ENCODE measurements at regions of chr16 and their contacts with region 1.

Region 1: DNA sequence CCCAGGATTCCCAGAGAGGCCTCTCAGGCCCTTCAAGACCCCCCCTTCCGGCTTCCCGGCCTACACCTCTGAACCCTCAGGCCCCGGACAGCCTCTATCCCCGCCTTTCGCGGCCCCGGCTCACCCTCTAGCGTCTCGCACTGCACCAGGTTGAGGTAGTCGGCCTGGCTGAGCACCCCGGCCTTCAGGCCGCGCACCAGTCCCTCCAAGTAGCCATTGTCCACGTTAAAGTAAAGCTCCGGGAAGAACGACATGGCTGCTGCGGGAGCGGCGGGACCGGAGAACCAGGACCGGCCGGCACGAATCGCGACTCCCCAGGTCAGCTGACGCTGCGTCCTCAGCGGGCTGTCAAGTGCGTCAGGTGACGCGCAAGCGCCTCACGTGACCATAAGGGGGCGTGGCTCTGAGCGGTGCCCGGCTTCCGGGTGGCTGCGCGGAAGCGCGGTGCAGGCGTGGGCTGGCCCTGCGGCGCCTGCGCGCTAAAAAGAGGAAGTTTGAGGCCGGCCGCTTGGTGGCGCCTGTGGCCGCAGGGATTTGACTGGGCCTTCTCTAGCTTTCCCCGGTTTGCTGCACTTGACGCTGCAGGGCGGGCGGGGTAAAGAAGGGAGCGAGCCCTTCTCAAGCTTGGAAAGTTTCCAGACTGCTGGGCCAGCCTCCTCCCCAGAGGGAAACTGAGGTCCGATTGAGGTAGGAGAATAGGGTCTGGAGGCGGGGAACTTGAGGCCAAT is at the start of gene ATP6V0D1:
- DNase-seq: peak; percentile 97 to 99 (median 98)
- H3K4me3 ChIP-seq: peak within 1 kb of the TSS; percentile 97 to 99
- H3K4me3 Mint-ChIP-seq: peak within 1 kb of the TSS; percentile 94 to 100 (median 99)
- H3K27ac ChIP-seq: peak within 1 kb of the TSS; percentile 99
- H3K27ac Mint-ChIP-seq: peak within 1 kb of the TSS; percentile 97 to 100 (median 98)
- H3K4me1 ChIP-seq: peaks cover 43% of the 10 kb centered on the region
- H3K4me1 Mint-ChIP-seq: peaks cover 25 to 65% (median 44%) of the 10 kb centered on the region in 4 donors
- H3K27me3 ChIP-seq: no peaks in the 10 kb centered on the region
- H3K27me3 Mint-ChIP-seq: no peaks in the 10 kb centered on the region
- total RNA-seq, gene ATP6V0D1: 42.8 to 49.0 TPM

Region 2: GRCh38 chr16:67301080-67301782 is 179.8 kb before region 1 on chr16:
- CTCF ChIA-PET with region 1: no interaction called
- POLR2A ChIA-PET with region 1: no interaction called
- intact Hi-C with region 1: no loop called
- DNase-seq: no peak
- H3K4me3 ChIP-seq: no peak overlapping the region
- H3K4me3 Mint-ChIP-seq: no peak overlapping the region
- H3K27ac ChIP-seq: no peak overlapping the region
- H3K27ac Mint-ChIP-seq: no peak overlapping the region
- H3K4me1 ChIP-seq: no peaks in the 10 kb centered on the region
- H3K4me1 Mint-ChIP-seq: no peaks in the 10 kb centered on the region
- H3K27me3 ChIP-seq: no peaks in the 10 kb centered on the region
- H3K27me3 Mint-ChIP-seq: peaks cover 3 to 5% of the 10 kb centered on the region in 2 donors

Region 3: DNA sequence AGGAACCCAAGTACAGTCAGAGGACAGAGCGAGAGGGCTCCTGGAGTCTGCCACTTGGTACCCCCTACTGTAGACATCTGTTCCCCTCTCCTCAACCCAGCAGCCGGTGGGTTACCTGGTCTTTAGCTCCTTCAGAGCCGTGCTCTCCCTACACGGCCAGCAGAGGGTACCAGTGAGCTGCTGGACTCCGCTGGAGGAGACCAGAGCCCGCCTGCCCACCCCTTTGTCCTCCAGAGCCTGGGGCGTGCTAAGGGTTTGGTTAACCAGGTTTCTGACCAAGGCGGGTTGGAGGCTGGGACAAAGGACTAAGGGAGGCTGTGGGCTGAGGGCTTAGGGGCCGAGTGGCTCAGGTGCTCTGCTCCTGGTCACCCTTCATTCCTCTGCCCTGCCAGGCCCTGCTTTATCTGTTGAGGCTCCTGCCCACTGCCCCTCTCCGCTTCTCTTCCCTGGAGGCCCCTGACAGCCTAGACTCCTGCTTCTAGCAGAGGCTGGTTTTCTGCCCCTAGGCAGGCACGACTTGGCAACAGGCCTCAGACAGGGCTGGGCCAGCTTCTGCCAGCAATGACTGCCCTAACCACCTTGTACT is 52.8 kb before region 1 on chr16:
- CTCF ChIA-PET with region 1: interaction called, 12 read pairs
- POLR2A ChIA-PET with region 1: no interaction called
- intact Hi-C with region 1: no loop called
- DNase-seq: peak in 4 of 5 donors; percentile 30 to 41 (median 32)
- H3K4me3 ChIP-seq: no peak overlapping the region
- H3K4me3 Mint-ChIP-seq: no peak overlapping the region
- H3K27ac ChIP-seq: no peak overlapping the region
- H3K27ac Mint-ChIP-seq: no peak overlapping the region
- H3K4me1 ChIP-seq: peaks cover 4% of the 10 kb centered on the region
- H3K4me1 Mint-ChIP-seq: peaks cover 0 to 10% (median 7%) of the 10 kb centered on the region in 4 donors
- H3K27me3 ChIP-seq: peaks cover 26% of the 10 kb centered on the region
- H3K27me3 Mint-ChIP-seq: peaks cover 45 to 46% of the 10 kb centered on the region in 2 donors

Region 4: DNA sequence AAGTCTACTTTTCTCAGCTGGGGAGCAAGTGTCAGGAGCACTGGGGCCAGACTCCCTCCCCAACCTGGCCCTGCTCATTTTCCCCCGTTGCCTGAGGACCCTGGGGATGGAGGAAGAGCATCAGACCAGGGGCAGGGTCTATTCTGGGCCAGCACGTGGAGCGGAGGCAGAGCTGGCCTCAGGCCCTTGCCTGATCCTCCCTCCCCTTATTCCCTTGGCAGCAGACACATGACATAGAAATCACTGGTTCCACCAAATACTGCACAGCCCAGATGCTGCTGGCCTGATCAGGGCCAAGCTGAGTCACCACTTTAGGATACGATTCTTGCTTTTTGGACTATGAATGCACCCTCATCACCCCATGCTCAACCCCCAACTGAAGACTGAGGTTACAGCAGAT is 18.1 kb after region 1 on chr16:
- CTCF ChIA-PET with region 1: interaction called, 51 read pairs
- POLR2A ChIA-PET with region 1: interaction called, 9 read pairs
- intact Hi-C with region 1: loop called (anchors 2 kb)
- DNase-seq: no peak
- H3K4me3 ChIP-seq: no peak overlapping the region
- H3K4me3 Mint-ChIP-seq: no peak overlapping the region
- H3K27ac ChIP-seq: no peak overlapping the region
- H3K27ac Mint-ChIP-seq: peak overlapping the region in 3 of 7 donors; percentile 29 to 67 (median 53)
- H3K4me1 ChIP-seq: peaks cover 15% of the 10 kb centered on the region
- H3K4me1 Mint-ChIP-seq: peaks cover 9 to 25% (median 20%) of the 10 kb centered on the region in 4 donors
- H3K27me3 ChIP-seq: no peaks in the 10 kb centered on the region
- H3K27me3 Mint-ChIP-seq: no peaks in the 10 kb centered on the region

Region 5: GRCh38 chr16:67514382-67514828 is 33.4 kb after region 1 on chr16:
- CTCF ChIA-PET with region 1: interaction called, 712 read pairs
- POLR2A ChIA-PET with region 1: interaction called, 14 read pairs
- intact Hi-C with region 1: loop called (anchors 1 kb)
- DNase-seq: peak; percentile 74 to 82 (median 79)
- H3K4me3 ChIP-seq: no peak overlapping the region
- H3K4me3 Mint-ChIP-seq: peak overlapping the region in 2 of 8 donors; percentile 50 to 57
- H3K27ac ChIP-seq: no peak overlapping the region
- H3K27ac Mint-ChIP-seq: peak overlapping the region in 3 of 7 donors; percentile 37 to 72 (median 69)
- H3K4me1 ChIP-seq: peaks cover 8% of the 10 kb centered on the region
- H3K4me1 Mint-ChIP-seq: peaks cover 4 to 10% (median 7%) of the 10 kb centered on the region in 4 donors
- H3K27me3 ChIP-seq: no peaks in the 10 kb centered on the region
- H3K27me3 Mint-ChIP-seq: no peaks in the 10 kb centered on the region

Region 6: DNA sequence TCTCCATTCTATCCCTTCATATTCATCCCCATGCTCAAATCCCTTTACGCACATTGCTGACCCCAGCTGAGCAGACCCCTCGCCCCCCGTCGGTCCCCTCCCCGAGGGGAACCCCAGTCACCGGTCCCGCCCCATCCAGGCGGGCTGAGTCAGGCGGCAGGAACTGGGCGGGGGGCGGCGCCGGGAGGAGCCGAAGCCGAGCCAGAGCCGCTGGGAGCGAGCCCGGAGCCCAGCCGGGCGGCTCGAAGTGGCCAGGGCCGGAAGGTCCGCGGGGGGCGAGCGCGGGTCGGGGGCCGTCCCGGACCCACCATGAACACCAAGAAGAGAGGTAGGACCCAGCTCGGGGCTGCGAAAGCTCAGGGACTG is 56.3 kb after region 1 on chr16:
- CTCF ChIA-PET with region 1: interaction called, 5 read pairs
- POLR2A ChIA-PET with region 1: interaction called, 11 read pairs
- intact Hi-C with region 1: no loop called
- DNase-seq: peak in 3 of 5 donors; percentile 37 to 66 (median 38)
- H3K4me3 ChIP-seq: peak overlapping the region; percentile 42 to 72
- H3K4me3 Mint-ChIP-seq: peak overlapping the region; percentile 81 to 92 (median 86)
- H3K27ac ChIP-seq: peak overlapping the region; percentile 84
- H3K27ac Mint-ChIP-seq: peak overlapping the region; percentile 90 to 93 (median 92)
- H3K4me1 ChIP-seq: peaks cover 26% of the 10 kb centered on the region
- H3K4me1 Mint-ChIP-seq: peaks cover 18 to 60% (median 34%) of the 10 kb centered on the region in 4 donors
- H3K27me3 ChIP-seq: no peaks in the 10 kb centered on the region
- H3K27me3 Mint-ChIP-seq: no peaks in the 10 kb centered on the region

Region 7: DNA sequence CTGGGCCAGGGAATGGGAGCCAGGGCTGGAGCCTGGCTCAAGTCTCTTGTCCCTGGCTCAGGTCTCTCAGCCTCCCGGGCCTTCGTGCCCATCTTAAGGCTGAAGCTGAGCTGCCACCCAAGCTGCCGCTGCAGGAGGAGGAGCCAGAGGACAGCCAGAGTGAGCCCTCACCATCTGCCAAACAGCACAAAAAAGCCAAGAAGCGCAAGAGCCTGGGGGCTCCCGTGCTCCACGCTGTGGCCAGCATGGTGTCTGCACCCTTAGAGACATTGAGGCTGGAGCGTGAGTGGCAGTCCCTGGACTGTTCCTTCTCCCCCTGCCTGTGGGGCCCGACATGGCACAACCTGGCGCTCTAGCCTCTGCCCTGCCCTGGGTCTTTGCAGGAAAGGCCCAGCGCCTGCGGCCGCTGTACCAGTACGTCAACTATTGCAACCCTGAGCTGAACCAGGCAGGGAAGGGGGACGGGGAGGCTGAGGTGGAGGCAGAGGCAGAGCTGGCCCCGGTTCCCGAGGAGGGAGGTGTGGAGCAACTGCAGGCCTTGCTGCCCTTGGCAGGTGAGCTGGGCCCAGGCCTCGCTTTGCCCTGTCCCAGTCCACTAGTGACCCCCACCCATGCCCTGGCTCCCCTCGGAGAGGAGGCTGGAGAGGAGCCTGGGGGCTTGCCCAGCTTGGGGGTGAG is 187.0 kb after region 1 on chr16:
- CTCF ChIA-PET with region 1: interaction called, 14 read pairs
- POLR2A ChIA-PET with region 1: interaction called, 13 read pairs
- intact Hi-C with region 1: no loop called
- DNase-seq: peak; percentile 78 to 90 (median 82)
- H3K4me3 ChIP-seq: peak overlapping the region in 1 of 2 donors; percentile 89
- H3K4me3 Mint-ChIP-seq: peak overlapping the region; percentile 40 to 92 (median 63)
- H3K27ac ChIP-seq: peak overlapping the region; percentile 64
- H3K27ac Mint-ChIP-seq: peak overlapping the region in 6 of 7 donors; percentile 41 to 75 (median 62)
- H3K4me1 ChIP-seq: peaks cover 24% of the 10 kb centered on the region
- H3K4me1 Mint-ChIP-seq: peaks cover 8 to 49% (median 15%) of the 10 kb centered on the region in 4 donors
- H3K27me3 ChIP-seq: no peaks in the 10 kb centered on the region
- H3K27me3 Mint-ChIP-seq: no peaks in the 10 kb centered on the region

Region 8: DNA sequence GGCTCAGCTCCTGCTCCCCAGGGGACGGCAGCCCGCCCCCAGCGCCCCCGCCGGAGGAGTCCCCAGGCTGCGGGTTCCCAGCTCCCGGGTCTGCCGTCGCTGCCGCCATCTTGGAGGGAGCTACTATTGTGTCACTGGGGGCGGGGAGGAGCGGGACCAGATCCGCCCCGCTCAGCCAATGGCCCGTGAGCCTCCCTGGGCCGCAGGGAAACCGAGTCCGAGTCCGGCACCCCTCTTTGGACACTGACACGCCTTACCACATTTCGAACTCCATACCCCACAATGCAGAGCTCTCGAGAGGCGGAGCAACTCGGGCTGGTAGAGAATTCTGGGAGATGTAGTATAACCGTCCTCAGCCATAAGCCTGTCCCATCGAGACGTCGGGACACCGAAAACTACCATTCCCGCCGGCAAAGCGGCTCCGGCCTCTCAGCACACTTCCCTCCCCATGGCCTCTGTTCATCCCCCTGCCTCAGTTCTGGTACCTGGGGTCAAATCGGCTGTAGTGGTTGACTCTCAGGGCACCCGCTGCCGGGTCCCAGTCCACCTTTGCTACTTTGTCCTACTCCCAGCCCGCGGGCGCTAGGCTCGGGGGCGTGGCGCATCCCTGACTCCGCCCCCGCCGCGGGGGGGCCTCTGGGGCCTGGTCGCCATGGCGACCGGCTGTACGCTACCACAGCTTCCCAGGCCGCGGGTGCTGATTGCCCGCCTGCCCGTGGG is 325.6 kb after region 1 on chr16 and contains the starts of genes RANBP10 and TSNAXIP1:
- CTCF ChIA-PET with region 1: interaction called, 6 read pairs
- POLR2A ChIA-PET with region 1: no interaction called
- intact Hi-C with region 1: loop called (anchors 1 kb)
- DNase-seq: peak; percentile 97 to 99 (median 99)
- H3K4me3 ChIP-seq: peak within 1 kb of the TSS; percentile 91 to 93
- H3K4me3 Mint-ChIP-seq: peak within 1 kb of the TSS; percentile 88 to 95 (median 90)
- H3K27ac ChIP-seq: peak within 1 kb of the TSS; percentile 95
- H3K27ac Mint-ChIP-seq: peak within 1 kb of the TSS; percentile 85 to 98 (median 95)
- H3K4me1 ChIP-seq: peaks cover 43% of the 10 kb centered on the region
- H3K4me1 Mint-ChIP-seq: peaks cover 26 to 52% (median 36%) of the 10 kb centered on the region in 4 donors
- H3K27me3 ChIP-seq: no peaks in the 10 kb centered on the region
- H3K27me3 Mint-ChIP-seq: no peaks in the 10 kb centered on the region
- total RNA-seq, gene RANBP10: 25.6 to 27.8 TPM
- total RNA-seq, gene TSNAXIP1: 0.44 to 0.64 TPM